ENCODE measurements at regions of chr17 and their contacts with region 1.

Region 1: DNA sequence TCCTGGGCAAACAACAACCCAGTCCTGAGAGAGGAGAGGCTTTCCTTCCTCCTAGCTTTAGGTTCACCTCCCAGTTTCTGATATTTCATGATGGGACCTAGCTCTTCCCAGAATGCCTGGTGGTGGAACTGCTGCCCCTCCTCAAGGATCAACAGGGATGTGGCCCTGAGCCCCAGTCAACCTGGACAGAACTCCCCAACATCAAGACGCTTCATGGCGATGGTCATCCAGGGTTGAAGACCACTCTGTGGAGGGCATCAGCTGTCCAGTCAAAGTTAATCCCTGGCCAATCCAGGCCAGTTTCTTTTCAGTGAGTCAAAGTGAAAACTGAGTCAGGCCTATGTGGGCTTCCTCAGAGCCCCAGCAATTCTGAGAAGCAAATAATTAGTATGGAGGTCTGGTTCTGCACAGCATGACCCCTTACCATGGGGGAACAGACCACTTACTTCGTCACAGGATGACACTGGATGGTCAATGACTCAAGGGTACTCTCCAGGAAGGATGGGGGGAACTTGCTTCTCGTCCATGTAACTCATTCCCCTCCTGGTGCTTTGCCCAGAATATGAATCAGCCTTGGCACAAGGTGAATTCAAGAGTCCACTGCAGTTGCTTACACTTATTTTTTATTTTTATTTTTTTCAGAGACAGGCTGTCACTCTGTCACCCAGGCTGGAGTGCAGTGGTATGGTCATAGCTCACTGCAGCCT is 14.7 kb upstream of the XYLT2 start:
- DNase-seq: no peak
- ATAC-seq: peak; percentile 65
- H3K4me3 ChIP-seq: no peak overlapping the region
- H3K27ac ChIP-seq: no peak overlapping the region
- H3K4me1 ChIP-seq: peaks cover 3% of the 10 kb centered on the region
- H3K27me3 ChIP-seq: no peaks in the 10 kb centered on the region
- CTCF ChIP-seq: no peak
- EP300 ChIP-seq: no peak
- POLR2A ChIP-seq: no peak
- RAD21 ChIP-seq: no peak

Region 2: DNA sequence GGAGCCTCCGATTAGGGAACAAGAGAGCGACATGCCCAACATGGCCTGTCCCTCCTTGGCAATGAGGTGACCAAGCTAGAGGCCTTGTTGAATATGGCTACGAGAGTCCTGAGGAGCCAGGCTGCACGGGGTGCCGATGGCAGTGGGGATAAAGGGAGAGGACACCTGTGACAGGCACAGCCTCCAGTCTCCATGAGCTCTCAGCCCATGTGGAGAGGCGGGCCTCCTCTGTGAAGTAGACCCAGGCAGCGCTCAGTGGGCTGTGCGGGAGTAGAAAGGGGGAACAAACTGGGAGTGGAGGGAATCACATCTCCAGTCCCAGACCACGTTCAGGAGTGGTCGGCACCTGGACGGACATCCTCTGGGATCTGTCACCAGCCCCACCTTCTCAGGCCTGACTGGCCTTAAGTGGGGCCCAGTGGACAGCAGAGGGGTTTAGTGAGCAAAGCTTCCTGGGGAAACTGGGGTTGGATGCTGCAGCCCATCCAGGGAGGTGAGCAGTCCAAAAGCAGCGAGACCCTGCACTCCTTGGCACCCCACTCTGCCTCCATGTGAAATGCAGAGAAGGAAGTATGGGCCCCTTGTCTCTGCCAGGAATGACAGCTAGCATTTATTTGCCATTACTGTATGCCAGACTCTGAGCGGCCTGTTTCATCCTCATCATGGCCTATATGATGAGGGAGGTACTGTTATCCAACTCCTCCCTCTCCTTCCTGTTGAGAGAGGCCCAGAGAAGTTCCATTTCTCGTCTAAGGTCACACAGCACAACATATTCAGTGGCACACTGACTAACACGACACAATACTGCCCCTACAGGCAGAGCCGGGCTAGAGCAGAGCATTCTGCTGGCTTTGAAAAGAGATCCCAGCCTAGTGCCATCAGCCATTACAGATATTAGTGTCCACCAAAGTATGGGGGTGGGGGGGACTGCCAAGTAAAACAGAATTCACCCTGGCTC is 61.5 kb before region 1 on chr17:
- CTCF ChIA-PET with region 1: interaction called, 28 read pairs
- POLR2A ChIA-PET with region 1: no interaction called
- RAD21 ChIA-PET with region 1: interaction called, 8 read pairs
- SMC1A ChIA-PET with region 1: interaction called, 5 read pairs
- in situ Hi-C with region 1: no loop called
- intact Hi-C with region 1: no loop called
- DNase-seq: peak; percentile 19
- ATAC-seq: peak; percentile 86
- H3K4me3 ChIP-seq: no peak overlapping the region
- H3K27ac ChIP-seq: no peak overlapping the region
- H3K4me1 ChIP-seq: no peaks in the 10 kb centered on the region; the same call in 1 of the 2 replicates
- H3K27me3 ChIP-seq: no peaks in the 10 kb centered on the region
- CTCF ChIP-seq: peak; percentile 77 to 87 (median 85)
- EP300 ChIP-seq: no peak
- POLR2A ChIP-seq: no peak
- RAD21 ChIP-seq: peak; percentile 65

Region 3: DNA sequence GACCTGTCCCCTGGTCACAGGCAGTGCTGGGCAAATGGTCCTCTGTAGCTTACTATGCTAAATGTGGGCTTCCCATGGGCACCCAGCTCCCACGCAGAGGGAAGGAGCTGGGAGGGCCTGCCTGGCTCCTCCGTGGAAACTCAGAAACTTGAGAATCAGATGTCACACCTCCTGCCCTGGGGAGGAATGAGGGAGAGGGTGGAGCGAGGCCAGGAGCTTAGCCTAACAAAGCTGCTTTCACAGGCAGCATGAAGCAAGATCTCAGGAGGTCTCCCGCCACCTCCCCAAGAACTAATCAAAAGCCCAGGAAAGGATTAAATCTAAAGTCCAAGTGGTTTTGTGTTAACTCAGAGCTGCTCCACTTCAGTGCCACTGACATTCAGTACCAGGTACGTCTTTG is 18.9 kb before region 1 on chr17:
- CTCF ChIA-PET with region 1: interaction called, 23 read pairs
- POLR2A ChIA-PET with region 1: interaction called, 9 read pairs
- RAD21 ChIA-PET with region 1: interaction called, 17 read pairs
- SMC1A ChIA-PET with region 1: interaction called, 15 read pairs
- in situ Hi-C with region 1: no loop called
- intact Hi-C with region 1: no loop called
- DNase-seq: no peak
- ATAC-seq: no peak
- H3K4me3 ChIP-seq: no peak overlapping the region
- H3K27ac ChIP-seq: no peak overlapping the region
- H3K4me1 ChIP-seq: peaks cover 17% of the 10 kb centered on the region
- H3K27me3 ChIP-seq: no peaks in the 10 kb centered on the region
- CTCF ChIP-seq: no peak
- EP300 ChIP-seq: no peak
- POLR2A ChIP-seq: no peak
- RAD21 ChIP-seq: no peak

Region 4: GRCh38 chr17:50318501-50319285 is 12.5 kb before region 1 on chr17:
- CTCF ChIA-PET with region 1: interaction called, 23 read pairs
- POLR2A ChIA-PET with region 1: interaction called, 3 read pairs
- RAD21 ChIA-PET with region 1: interaction called, 17 read pairs
- SMC1A ChIA-PET with region 1: interaction called, 6 read pairs
- in situ Hi-C with region 1: no loop called
- intact Hi-C with region 1: no loop called
- DNase-seq: no peak
- ATAC-seq: no peak
- H3K4me3 ChIP-seq: no peak overlapping the region
- H3K27ac ChIP-seq: no peak overlapping the region
- H3K4me1 ChIP-seq: peaks cover 4% of the 10 kb centered on the region; the same call in 1 of the 2 replicates
- H3K27me3 ChIP-seq: no peaks in the 10 kb centered on the region
- CTCF ChIP-seq: no peak
- EP300 ChIP-seq: no peak
- POLR2A ChIP-seq: no peak
- RAD21 ChIP-seq: no peak

Region 5: DNA sequence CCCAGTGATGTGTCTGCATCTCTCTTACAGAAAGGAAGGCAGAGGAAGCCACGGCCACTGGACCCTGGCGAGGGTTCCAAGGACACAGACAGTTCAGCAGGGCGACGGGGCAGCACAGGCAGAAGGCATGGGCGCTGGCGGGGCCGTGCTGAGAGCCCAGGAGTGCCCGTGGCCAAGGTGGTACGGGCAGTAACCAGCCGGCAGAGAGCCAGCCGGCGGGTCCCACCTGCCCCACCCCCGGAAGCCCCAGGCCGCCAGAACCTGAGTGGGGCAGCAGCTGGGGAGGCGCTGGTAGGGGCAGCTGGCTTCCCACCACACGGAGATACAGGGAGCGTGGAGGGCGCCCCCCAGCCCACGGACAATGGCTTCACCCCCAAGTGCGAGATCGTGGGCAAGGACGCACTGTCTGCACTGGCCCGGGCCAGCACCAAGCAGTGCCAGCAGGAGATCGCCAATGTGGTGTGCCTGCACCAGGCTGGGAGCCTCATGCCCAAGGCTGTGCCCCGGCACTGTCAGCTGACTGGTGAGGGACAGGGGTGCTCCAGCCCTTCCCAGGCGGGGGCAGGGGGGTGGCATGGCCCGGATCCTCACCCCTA is 22.5 kb after region 1 on chr17:
- CTCF ChIA-PET with region 1: no interaction called
- POLR2A ChIA-PET with region 1: no interaction called
- RAD21 ChIA-PET with region 1: no interaction called
- SMC1A ChIA-PET with region 1: no interaction called
- in situ Hi-C with region 1: no loop called
- intact Hi-C with region 1: no loop called
- DNase-seq: no peak
- ATAC-seq: no peak
- H3K4me3 ChIP-seq: no peak overlapping the region
- H3K27ac ChIP-seq: no peak overlapping the region
- H3K4me1 ChIP-seq: no peaks in the 10 kb centered on the region; the same call in 1 of the 2 replicates
- H3K27me3 ChIP-seq: no peaks in the 10 kb centered on the region
- CTCF ChIP-seq: no peak
- EP300 ChIP-seq: no peak
- POLR2A ChIP-seq: peak; percentile 52; the same call in 1 of the 2 replicates
- RAD21 ChIP-seq: no peak